ENCODE measurements at regions of chr7 and their contacts with region 1.

Region 1: DNA sequence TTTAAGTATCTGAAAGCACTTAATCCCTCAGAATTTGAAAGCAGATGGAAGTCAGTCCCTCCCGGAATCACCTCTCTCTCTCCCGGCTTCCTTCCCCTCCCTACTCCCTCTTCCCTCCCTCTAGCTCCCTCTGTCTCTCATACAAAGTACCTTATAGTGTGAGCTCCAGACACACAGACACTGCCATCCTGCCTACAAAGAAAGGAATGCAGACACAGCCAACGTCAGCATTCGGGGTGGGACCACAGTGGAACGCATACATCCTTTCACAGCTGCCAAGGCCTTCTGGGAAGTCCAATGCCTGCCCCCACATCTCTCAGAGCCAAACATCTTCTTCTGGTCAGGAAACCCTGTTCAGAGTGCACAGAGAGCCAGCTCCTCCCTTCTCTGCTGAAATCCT is 9.3 kb downstream of the NOD1 start:
- DNase-seq: no peak
- ATAC-seq: no peak
- H3K4me3 ChIP-seq: no peak overlapping the region
- H3K27ac ChIP-seq: no peak overlapping the region
- H3K4me1 ChIP-seq: peaks cover 10 to 32% of the 10 kb centered on the region in 2 experiments; a peak in 4 of 5 replicates
- H3K27me3 ChIP-seq: no peaks in the 10 kb centered on the region
- CTCF ChIP-seq: peak in 1 of 3 experiments; percentile 22; a peak in 1 of 6 replicates
- EP300 ChIP-seq: no peak
- POLR2A ChIP-seq: no peak
- RAD21 ChIP-seq: no peak

Region 2: GRCh38 chr7:30428246-30429155 is 40.8 kb before region 1 on chr7:
- CTCF ChIA-PET with region 1: no interaction called
- POLR2A ChIA-PET with region 1: no interaction called
- in situ Hi-C with region 1: no loop called
- intact Hi-C with region 1: loop called (anchors 5 kb)
- DNase-seq: no peak
- ATAC-seq: no peak
- H3K4me3 ChIP-seq: no peak overlapping the region
- H3K27ac ChIP-seq: no peak overlapping the region
- H3K4me1 ChIP-seq: no peaks in the 10 kb centered on the region; a peak in 1 of 5 replicates
- H3K27me3 ChIP-seq: no peaks in the 10 kb centered on the region
- CTCF ChIP-seq: no peak
- EP300 ChIP-seq: no peak
- POLR2A ChIP-seq: no peak
- RAD21 ChIP-seq: no peak

Measured in K562 (cell line).